Posterior vena cava (tissue), 2 donors: ENCODE measurements at regions of chr10 and their contacts with region 1.

Region 1: DNA sequence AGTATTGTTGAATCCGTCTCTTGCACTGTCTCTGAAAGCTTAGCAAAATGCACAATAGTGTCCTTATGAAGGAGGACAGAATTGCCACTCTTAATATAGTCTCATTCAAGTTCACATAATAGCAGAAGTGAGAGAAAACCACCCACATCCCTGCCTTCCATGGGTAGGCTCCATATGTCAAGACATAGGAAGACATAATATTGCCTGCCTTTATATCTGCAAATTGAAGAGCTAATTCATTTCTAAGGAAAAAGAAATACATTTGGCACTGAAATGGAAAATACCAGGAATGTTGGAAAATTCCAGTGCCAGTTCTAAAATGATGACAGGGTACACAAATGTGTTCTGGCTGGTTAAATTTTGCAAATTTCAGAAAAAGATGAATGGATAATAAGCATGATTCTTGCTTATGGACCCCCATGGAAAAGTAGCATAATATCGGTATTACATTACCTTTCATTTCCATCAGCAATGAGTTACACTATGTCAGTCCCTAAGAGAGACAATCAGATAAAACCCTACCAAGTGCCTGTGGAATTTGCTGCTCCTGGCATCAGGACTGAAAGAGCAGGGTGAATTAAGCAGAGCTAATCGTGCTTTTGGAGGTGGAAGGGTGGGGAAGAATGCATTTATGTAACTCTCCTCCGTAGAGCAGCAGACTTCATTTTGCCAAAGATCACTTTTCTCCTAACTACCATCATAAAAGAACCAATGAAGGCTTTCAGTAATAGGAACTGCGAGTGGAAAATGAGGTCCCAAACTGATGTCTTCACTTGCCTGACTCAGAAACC is 312.6 kb downstream of the FGFR2 start:
- DNase-seq: no peak

Region 2: DNA sequence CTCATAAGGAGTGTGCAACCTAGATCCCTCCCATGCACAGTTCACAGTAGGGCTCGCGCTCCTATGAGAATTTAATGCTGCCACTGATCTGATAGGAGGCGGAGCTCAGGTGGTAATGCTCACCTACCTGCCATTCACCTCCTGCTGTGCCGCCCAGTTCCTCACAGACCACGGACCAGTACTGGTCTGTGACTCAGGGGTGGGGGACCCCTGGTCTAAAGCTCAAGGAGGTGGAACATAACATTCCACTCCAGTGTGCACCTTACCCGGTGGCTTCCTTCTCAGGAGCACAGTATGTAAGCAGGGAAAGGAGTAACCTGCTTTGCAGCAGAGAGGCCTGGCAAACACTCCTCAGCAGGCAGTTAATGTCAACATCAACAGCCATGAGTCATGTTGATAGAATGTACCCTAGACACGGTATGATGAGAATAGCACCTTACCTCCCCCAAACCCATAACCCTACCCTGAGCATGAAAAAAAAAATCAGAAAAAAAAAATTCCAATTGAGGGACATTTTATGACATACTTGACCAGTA is 39.1 kb after region 1 on chr10:
- intact Hi-C with region 1: loop called in 1 of 2 experiments (anchors 2 kb)
- DNase-seq: no peak